ENCODE measurements at regions of chr14 and their contacts with region 1.

Region 1: DNA sequence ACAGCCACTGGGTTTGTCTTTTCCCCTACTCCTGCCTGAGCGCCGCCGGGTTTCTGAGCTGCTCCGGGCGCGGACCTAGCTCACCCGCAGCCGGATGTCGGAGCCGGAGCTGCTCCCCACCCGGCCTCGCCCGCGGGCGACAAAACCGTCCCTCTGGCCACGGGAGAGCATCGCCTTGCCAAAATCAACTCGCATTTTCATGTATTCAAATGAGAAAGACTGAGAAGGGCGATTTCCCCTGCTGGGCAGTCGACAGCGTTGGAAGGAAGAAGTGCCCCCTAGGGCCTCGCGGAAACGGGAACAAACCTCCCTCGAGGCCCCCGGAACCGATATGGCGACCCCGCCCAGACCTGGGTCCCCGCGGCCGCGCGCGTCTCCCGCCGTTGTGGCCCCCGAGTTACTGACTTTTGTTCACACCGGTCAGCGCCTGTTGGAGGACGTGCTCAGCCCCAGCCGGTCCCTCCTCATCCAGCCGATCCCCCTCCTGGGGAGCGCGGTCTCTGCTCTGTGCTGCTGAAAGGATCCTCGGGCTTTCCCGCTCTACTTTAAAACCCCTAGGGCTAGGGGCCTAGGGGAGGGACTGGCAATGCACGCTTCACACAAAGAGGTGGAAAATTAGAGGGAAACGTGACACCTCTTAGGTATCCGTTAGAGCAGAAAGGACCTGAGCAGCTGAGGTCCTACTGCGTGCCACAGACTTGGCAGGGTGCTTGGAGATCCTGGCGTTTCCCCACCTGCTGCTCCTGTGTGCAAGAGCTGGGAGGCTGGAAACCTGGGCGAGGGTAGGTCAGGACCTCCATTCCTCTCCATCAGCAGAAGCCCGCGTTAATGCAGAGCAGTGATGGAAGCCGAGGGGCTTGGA is 4.3 kb downstream of the TTC6 start:
- DNase-seq: peak; percentile 31 to 50
- ATAC-seq: no peak

Region 2: DNA sequence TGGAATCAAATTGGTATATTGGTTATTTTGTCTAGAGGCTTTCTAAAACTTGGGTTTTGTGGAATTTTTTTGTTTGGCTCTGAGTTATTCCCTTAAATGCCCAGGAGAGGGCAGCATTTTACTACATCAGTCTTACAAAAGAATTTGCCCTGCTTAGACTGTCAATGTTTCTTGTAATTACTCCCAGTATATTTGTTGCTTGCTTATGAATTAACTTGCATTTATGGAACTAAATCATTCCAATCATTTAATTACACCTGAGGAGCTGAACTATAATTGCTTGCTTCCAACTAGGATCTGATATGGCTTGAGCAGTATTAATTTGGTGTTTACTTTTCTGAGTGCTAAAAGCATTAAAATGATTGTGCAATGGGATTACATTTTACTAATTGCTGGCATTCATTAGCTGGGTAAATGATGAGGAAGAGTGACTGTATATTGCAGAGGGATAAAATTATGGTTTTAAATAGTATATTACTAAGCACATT is 353.3 kb before region 1 on chr14:
- intact Hi-C with region 1: loop called in 1 of 2 experiments (anchors 10 kb)
- DNase-seq: no peak
- ATAC-seq: peak; percentile 67

Region 3: GRCh38 chr14:38839743-38840365 is 1240.1 kb after region 1 on chr14:
- intact Hi-C with region 1: no loop called
- DNase-seq: peak in 1 of 2 donors; percentile 40
- ATAC-seq: peak; percentile 90

Measured in left colon (tissue), 2 donors.